ENCODE measurements at regions of chr13 and their contacts with region 1.

Region 1: GRCh38 chr13:51070005-51070649 is 40.9 kb downstream of the C13orf42 start:
- DNase-seq: peak; percentile 80 to 93 (median 88)
- H3K4me3 ChIP-seq: peak overlapping the region in 3 of 59 donors; percentile 4 to 29 (median 7)
- H3K27ac ChIP-seq: peak overlapping the region in 2 of 59 donors; percentile 14 to 25
- H3K27me3 ChIP-seq: peaks cover 0 to 13% (median 0%) of the 10 kb centered on the region in 45 donors
- CTCF ChIP-seq: peak; percentile 82 to 99 (median 96)

Region 2: GRCh38 chr13:49669735-49670309 is 1400.3 kb before region 1 on chr13:
- intact Hi-C with region 1: loop called in 1 of 2 experiments (anchors 2 kb)
- DNase-seq: peak; percentile 28 to 74 (median 64)
- H3K4me3 ChIP-seq: no peak overlapping the region
- H3K27ac ChIP-seq: peak overlapping the region in 1 of 59 donors; percentile 5
- H3K27me3 ChIP-seq: no peaks in the 10 kb centered on the region
- CTCF ChIP-seq: peak in 55 of 56 donors; percentile 51 to 92 (median 73)

Region 3: DNA sequence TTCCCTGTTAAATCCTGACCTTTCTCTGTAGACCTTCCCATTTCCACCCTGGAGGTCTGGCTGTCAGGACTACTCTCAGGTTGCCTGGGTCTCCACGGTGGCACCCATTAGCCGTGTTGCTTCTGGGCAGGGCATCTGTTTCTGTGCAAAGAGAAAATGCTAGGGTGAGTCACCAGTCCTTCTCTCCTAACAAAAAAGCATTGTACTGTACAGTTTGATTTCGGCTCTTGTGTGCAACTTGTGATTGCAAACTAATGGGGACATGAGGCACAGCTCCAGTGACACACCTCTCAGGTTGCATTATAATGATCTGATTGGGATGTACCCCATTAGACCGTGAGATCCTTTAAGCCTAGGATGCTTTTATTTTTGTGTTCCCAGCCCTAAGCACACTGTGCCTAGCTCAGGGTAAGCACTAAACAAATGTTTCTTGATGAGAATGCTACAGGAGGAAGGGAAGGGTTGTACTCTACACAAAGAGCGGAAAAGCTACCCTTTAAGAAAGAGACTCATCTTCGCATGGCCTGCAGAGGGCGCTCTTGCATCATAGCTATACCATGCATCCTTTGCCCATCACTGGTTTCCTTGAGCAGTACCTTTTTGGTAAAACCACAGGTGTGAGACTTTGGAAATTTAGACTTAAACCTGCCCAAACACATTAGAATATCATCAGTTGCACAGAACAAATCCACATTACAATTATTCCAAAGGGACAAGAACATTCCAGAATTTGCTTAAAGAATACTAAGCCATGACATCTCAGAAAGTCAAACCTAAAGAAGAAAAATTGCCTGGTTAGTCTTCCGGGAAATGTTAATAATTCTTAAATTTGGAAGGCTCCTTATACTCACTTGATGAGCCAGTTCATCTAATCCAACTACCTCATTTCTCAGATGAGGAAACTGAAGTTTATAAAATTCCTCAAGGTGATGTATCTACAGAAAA is 1093.5 kb before region 1 on chr13:
- intact Hi-C with region 1: loop called in 1 of 2 experiments (anchors 10 kb)
- DNase-seq: peak; percentile 53 to 83 (median 68)
- H3K4me3 ChIP-seq: no peak overlapping the region
- H3K27ac ChIP-seq: peak overlapping the region in 9 of 59 donors; percentile 10 to 60 (median 41)
- H3K27me3 ChIP-seq: no peaks in the 10 kb centered on the region
- CTCF ChIP-seq: peak; percentile 75 to 98 (median 88)

Region 4: DNA sequence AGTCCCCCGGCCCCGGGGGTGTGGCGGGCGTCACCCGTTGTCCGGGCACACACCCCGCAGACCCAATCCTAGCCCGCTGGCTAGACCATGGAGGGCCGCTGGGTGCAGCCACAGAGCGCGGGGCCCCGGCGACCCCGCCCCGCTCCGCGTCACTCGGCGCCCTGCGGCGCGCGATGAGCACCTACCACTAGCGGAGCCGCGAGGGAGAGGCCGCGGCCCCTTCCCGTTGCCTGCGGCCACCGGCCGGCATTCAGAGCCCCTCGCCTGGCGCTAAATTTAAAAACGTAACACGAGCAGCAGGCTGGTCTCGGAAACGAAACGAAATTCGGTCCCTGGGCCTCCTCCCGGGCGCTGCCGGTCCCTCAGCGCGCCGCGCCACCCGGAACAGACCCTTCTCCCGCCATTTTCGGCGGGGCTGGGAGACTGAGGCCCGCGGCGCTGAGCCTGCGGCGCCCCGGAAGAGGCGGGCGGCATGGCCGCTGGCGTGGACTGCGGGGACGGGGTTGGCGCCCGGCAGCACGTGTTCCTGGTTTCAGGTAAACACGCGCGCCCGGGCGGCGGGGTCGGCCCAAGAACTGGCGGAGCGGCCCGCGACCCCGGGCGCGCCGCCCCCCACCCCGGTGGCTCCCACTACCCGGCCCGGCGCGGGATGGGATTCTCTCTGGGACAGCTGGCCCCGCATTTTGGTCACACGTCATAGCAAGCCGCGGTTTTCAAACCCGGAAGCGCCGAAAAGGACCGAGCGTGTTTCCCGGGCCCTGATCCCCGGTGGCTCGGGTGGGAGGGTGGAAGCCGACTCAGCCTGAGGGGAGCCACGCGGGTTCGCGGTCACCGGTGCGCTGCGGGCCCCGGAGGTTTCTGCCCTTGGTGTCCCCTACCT is 160.3 kb before region 1 on chr13 and contains the start of gene RNASEH2B:
- intact Hi-C with region 1: no loop called
- DNase-seq: peak; percentile 38 to 80 (median 56)
- H3K4me3 ChIP-seq: peak within 1 kb of the TSS; percentile 69 to 97 (median 86)
- H3K27ac ChIP-seq: peak within 1 kb of the TSS; percentile 45 to 97 (median 88)
- H3K27me3 ChIP-seq: no peaks in the 10 kb centered on the region
- CTCF ChIP-seq: peak in 16 of 56 donors; percentile 4 to 33 (median 18)
- total RNA-seq, gene RNASEH2B: 30.4 to 70.7 (median 48.7) TPM

Region 5: GRCh38 chr13:51101636-51102235 is 31.6 kb after region 1 on chr13:
- intact Hi-C with region 1: no loop called
- DNase-seq: no peak
- H3K4me3 ChIP-seq: no peak overlapping the region
- H3K27ac ChIP-seq: no peak overlapping the region
- H3K27me3 ChIP-seq: peaks cover 0 to 8% (median 0%) of the 10 kb centered on the region in 45 donors
- CTCF ChIP-seq: no peak

Region 6: DNA sequence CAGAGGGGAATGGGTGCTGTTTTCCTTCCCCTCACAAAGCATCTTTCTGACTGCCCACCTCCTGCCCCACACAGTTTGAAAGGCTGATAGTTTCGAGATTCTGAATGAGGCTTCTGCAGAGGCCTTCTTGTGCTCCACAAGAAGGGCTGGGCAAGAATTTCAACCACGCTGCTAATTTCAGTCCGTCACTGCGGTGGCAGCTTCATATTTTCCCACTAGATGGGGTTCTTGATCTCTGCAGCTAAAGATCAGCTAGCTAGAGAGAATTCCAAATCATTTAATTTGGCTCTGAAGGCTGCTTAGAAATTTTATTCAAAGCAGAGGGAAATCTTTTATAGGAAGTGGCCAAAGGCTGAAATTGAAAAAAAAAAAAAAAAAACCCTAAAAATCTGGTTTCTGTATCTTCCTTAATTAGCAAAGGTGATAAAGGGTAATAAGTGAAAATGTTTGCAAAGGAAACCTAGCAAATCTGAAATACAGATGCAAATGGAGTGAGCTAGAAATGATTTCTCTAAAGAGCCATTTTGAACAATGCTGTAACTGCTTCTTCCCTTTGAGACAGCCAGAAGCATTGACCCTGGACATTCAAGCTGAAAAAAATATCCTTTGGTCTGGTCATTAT is 78.9 kb after region 1 on chr13:
- intact Hi-C with region 1: no loop called
- DNase-seq: peak in 8 of 10 donors; percentile 49 to 70 (median 57)
- H3K4me3 ChIP-seq: no peak overlapping the region
- H3K27ac ChIP-seq: peak overlapping the region in 19 of 59 donors; percentile 1 to 74 (median 41)
- H3K27me3 ChIP-seq: no peaks in the 10 kb centered on the region
- CTCF ChIP-seq: peak; percentile 50 to 86 (median 75)